ENCODE measurements at regions of chr9 and their contacts with region 1.

Region 1: DNA sequence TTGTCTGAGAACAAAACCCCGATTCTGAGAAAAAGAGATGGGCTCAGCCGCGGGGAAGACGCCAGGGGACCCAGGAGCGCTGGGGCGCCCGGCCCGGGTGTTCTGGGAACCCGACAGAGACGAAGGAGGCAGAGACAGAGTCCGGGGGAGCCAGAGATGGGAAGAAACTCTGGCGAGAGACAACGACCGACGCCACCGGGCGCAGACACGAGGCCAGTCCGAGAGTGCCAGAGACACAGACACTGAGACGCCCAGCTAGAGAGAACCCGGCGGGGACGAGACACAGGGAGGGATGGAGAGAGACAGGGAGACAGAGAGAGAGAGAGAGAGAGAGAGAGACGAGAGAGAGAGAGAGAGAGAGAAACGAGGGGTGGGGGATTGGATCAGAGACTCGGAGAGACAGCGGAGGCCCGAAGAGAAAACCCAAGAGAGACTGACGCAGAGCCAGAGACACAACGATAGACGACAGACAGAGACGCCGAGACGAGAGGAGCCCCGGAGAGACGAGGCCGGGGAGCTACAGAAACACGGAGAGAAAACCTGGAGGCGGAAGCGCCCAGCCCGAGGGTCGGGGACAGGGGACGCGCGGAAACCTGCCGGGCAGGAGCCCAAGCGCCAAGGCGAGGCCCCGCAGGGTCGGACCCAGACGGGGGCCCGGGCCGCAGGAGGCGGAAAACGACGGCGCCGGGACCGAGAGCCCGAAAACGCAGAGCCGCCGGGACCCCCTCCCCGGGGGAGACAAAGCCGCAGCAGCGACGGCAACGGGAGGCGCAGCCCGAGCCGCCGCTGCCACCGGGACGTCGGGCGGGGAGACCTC is 3.3 kb downstream of the NR5A1 start:
- DNase-seq: no peak
- ATAC-seq: no peak
- H3K4me3 ChIP-seq: peak overlapping the region; percentile 19 to 30; a peak in 3 of 4 replicates
- H3K27ac ChIP-seq: no peak overlapping the region
- H3K4me1 ChIP-seq: no peaks in the 10 kb centered on the region
- H3K27me3 ChIP-seq: no peaks in the 10 kb centered on the region; the same call in 1 of the 2 replicates
- CTCF ChIP-seq: no peak

Region 2: DNA sequence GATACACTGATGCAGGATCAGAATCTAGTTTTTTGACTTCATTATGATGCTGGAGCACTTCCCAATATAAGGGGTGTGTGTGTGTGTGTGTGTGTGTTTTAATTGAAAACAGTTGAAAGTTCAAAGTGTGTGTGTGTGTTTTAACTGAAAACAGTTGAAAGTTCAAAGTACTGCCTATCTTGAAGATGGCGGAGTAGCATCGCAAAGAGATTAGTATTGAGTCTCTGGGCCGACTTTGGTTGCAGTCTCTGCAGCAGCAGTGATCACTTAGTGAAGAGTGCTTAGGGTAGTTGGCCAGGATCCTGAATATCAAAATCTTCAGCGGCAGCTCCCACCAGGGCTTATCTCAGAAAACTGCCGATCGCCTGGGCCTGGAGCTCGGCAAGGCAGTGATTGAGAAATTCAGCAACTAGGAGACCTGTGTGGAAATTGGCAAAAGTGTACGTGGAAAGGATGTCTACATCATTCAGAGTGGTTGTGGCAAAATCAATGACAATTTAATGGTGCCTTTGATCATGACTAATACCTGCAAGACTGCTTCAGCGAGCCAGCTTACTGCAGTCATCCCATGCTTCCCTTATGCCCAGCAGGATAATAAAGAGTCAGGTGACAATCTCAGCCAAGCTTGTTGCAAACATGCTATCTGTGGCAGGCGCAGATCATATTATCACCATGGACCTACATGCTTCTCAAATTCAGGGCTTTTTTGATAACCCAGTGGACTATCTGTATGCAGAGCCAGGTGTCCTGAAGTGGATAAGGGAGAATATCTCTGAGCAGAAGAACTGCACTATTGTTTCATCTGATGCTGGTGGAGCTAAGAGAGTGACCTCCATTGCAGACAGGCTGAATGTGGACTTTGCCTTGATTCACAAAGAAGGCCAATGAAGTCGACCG is 646.7 kb after region 1 on chr9:
- CTCF ChIA-PET with region 1: interaction called, 16 read pairs
- POLR2A ChIA-PET with region 1: no interaction called
- in situ Hi-C with region 1: no loop called
- intact Hi-C with region 1: no loop called
- DNase-seq: no peak
- ATAC-seq: no peak
- H3K4me3 ChIP-seq: no peak overlapping the region
- H3K27ac ChIP-seq: no peak overlapping the region
- H3K4me1 ChIP-seq: no peaks in the 10 kb centered on the region
- H3K27me3 ChIP-seq: no peaks in the 10 kb centered on the region
- CTCF ChIP-seq: no peak